IMR-90 (cell line): ENCODE measurements at regions of chr18 and their contacts with region 1.

Region 1: DNA sequence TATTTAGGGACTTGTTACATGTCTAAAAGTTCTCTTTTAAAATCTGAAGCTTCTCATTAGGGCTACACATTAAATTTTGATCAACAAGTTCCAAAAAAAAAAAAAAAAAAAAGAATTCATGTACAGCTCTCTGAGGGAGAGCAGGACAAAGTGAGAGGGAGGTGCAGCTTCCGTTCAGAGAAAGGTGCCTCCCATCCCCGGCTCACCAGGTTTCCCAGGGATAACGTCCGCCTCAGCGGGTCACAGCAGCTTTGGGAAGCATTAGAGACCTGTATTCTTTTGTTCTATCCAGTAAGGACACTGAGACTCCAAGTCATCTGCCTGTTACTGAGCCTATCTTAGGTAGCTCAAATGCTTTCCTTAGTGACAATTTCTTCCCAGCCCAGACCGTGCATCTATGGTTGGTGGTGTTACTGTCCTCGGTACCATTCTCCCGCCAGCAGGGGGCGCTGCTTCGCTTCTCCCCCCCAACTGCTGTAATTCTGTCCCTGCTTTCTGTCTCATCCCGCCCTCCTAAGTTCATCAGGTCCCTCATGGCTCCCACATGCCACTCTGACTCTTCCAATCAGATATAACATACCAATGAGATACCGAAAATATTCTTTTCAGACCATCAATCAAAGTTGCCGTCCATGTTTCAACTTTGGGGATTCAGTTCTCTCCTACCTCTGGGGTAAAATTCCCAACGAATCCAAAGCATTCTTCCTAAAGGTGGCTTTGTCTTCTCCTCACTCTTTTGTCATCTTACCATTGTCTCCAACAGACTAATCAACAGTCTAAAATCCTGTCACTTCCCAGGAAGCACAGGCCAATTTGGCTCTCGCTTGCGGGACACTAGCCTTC is 466.5 kb downstream of the METTL4 start:
- DNase-seq: peak; percentile 24
- ATAC-seq: peak; percentile 80
- H3K4me3 ChIP-seq: no peak overlapping the region
- H3K27ac ChIP-seq: no peak overlapping the region
- H3K4me1 ChIP-seq: no peaks in the 10 kb centered on the region
- H3K27me3 ChIP-seq: no peaks in the 10 kb centered on the region
- CTCF ChIP-seq: peak; percentile 64
- POLR2A ChIP-seq: no peak
- RAD21 ChIP-seq: peak; percentile 57

Region 2: DNA sequence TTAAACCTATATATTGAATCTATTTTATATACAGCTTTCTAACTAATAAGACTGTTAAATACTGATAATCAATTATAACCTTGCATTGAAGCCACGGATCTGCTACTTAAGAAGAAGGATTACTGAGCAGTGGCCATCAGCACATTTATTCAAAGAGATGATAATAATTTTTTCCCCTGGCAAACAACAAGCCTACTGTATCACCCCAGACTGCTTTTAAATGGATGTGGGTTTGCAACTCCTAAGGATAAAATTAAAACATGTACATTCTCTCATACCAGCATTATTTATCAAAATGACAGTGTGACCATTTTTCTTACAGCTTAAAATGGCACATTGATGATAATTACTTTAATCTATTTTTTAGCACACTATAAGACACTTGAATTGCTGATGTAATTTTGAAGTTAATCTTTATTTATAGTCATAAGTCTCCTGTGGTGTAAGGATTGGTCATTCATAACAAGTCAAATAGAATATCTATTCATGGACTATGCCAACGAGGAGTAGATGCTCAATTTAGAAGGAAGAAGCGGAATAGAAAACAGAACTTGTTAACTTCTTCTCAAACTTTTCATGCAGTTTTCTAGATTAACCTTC is 51.3 kb before region 1 on chr18:
- CTCF ChIA-PET with region 1: no interaction called
- POLR2A ChIA-PET with region 1: interaction called, 12 read pairs
- dilution Hi-C with region 1: no loop called
- in situ Hi-C with region 1: no loop called
- intact Hi-C with region 1: no loop called
- DNase-seq: no peak
- ATAC-seq: no peak
- H3K4me3 ChIP-seq: no peak overlapping the region
- H3K27ac ChIP-seq: no peak overlapping the region
- H3K4me1 ChIP-seq: no peaks in the 10 kb centered on the region
- H3K27me3 ChIP-seq: no peaks in the 10 kb centered on the region
- CTCF ChIP-seq: no peak
- POLR2A ChIP-seq: no peak
- RAD21 ChIP-seq: no peak

Region 3: DNA sequence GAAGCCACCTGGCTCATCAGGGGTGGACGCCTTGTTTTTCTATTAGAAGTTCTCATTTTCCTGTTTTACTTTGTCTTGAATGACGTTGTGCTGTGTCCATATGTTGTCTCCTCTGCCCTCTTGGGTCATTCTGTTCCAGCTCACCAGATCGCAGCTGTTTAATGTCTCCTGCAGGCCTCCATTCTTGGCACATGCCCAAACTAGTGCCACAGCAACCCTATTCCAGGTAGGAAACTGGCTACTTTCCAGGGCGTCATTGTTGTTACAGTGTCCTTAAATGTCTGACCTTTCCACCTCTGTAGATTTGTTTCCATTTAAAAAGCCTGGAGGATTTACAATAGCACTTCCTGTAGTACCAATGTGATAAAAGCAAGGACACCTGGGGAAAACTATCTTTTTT is 34.2 kb before region 1 on chr18:
- CTCF ChIA-PET with region 1: no interaction called
- POLR2A ChIA-PET with region 1: no interaction called
- dilution Hi-C with region 1: no loop called
- in situ Hi-C with region 1: no loop called
- intact Hi-C with region 1: no loop called
- DNase-seq: no peak
- ATAC-seq: no peak
- H3K4me3 ChIP-seq: no peak overlapping the region
- H3K27ac ChIP-seq: no peak overlapping the region
- H3K4me1 ChIP-seq: no peaks in the 10 kb centered on the region
- H3K27me3 ChIP-seq: no peaks in the 10 kb centered on the region
- CTCF ChIP-seq: no peak
- POLR2A ChIP-seq: no peak
- RAD21 ChIP-seq: no peak

Region 4: GRCh38 chr18:2121221-2121620 is 16.4 kb after region 1 on chr18:
- CTCF ChIA-PET with region 1: interaction called, 5 read pairs
- POLR2A ChIA-PET with region 1: no interaction called
- dilution Hi-C with region 1: no loop called
- in situ Hi-C with region 1: no loop called
- intact Hi-C with region 1: loop called (anchors 1 kb)
- DNase-seq: no peak
- ATAC-seq: no peak
- H3K4me3 ChIP-seq: no peak overlapping the region
- H3K27ac ChIP-seq: no peak overlapping the region
- H3K4me1 ChIP-seq: no peaks in the 10 kb centered on the region
- H3K27me3 ChIP-seq: no peaks in the 10 kb centered on the region
- CTCF ChIP-seq: no peak
- POLR2A ChIP-seq: no peak
- RAD21 ChIP-seq: no peak

Region 5: DNA sequence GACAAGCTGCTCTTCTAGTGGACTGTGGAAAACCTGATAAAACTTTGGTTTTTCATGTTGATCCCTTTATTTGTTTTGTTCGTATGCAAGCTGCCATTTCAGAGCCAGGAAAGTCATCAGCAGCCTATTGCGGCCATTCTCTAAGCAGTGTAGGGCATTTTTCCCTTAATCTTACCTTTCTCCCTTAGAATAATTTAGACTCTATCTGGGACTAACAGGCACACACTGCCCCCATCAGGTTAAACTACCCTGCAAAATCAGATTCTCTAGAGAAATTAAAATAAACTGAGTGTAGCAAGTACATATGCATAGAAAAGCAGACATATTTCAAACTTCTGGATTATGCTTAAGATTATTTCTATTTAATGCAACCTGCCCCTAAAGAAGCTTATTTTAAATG is 119.0 kb after region 1 on chr18:
- CTCF ChIA-PET with region 1: interaction called, 36 read pairs
- POLR2A ChIA-PET with region 1: no interaction called
- dilution Hi-C with region 1: no loop called
- in situ Hi-C with region 1: no loop called
- intact Hi-C with region 1: loop called (anchors 5 kb)
- DNase-seq: peak; percentile 6
- ATAC-seq: peak; percentile 35; the same call in 1 of the 2 replicates
- H3K4me3 ChIP-seq: no peak overlapping the region
- H3K27ac ChIP-seq: no peak overlapping the region
- H3K4me1 ChIP-seq: no peaks in the 10 kb centered on the region
- H3K27me3 ChIP-seq: no peaks in the 10 kb centered on the region
- CTCF ChIP-seq: peak; percentile 45
- POLR2A ChIP-seq: no peak
- RAD21 ChIP-seq: peak; percentile 24; the same call in 1 of the 2 replicates

Region 6: DNA sequence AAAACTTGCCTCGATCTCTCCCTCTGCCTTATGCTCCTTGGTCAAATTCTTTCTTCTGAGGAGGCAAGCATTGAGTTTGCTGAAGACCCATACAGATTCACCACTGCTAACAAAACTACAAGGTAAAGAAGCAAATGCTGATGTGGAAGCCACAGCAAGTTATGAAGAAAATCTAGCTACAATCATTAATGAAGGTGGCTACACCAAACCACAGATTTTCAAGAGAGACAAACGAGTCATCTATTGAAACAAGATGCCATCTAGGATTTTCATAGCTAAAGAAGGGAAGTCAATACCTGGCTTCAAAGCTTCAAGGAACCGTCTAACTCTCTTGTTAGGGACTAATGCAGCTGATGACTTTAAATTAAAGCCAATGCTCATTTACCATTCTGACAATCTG is 263.3 kb after region 1 on chr18:
- CTCF ChIA-PET with region 1: no interaction called
- POLR2A ChIA-PET with region 1: no interaction called
- dilution Hi-C with region 1: no loop called
- in situ Hi-C with region 1: no loop called
- intact Hi-C with region 1: no loop called
- DNase-seq: no peak
- ATAC-seq: no peak
- H3K4me3 ChIP-seq: no peak overlapping the region
- H3K27ac ChIP-seq: no peak overlapping the region
- H3K4me1 ChIP-seq: no peaks in the 10 kb centered on the region
- H3K27me3 ChIP-seq: no peaks in the 10 kb centered on the region; the same call in 1 of the 2 replicates
- CTCF ChIP-seq: no peak
- POLR2A ChIP-seq: no peak
- RAD21 ChIP-seq: no peak

Region 7: GRCh38 chr18:2536493-2536892 is 431.7 kb after region 1 on chr18:
- CTCF ChIA-PET with region 1: interaction called, 17 read pairs
- POLR2A ChIA-PET with region 1: no interaction called
- dilution Hi-C with region 1: no loop called
- in situ Hi-C with region 1: loop called (anchors 10 kb)
- intact Hi-C with region 1: no loop called
- DNase-seq: peak; percentile 72
- ATAC-seq: peak; percentile 75
- H3K4me3 ChIP-seq: no peak overlapping the region
- H3K27ac ChIP-seq: no peak overlapping the region
- H3K4me1 ChIP-seq: no peaks in the 10 kb centered on the region
- H3K27me3 ChIP-seq: no peaks in the 10 kb centered on the region
- CTCF ChIP-seq: no peak
- POLR2A ChIP-seq: no peak
- RAD21 ChIP-seq: no peak

Region 8: GRCh38 chr18:2547477-2548087 is 442.7 kb after region 1 on chr18:
- CTCF ChIA-PET with region 1: interaction called, 17 read pairs
- POLR2A ChIA-PET with region 1: no interaction called
- dilution Hi-C with region 1: no loop called
- in situ Hi-C with region 1: no loop called
- intact Hi-C with region 1: loop called (anchors 1 kb)
- DNase-seq: peak; percentile 71
- ATAC-seq: peak; percentile 89
- H3K4me3 ChIP-seq: no peak overlapping the region
- H3K27ac ChIP-seq: no peak overlapping the region
- H3K4me1 ChIP-seq: no peaks in the 10 kb centered on the region
- H3K27me3 ChIP-seq: no peaks in the 10 kb centered on the region
- CTCF ChIP-seq: peak; percentile 66
- POLR2A ChIP-seq: no peak
- RAD21 ChIP-seq: peak; percentile 64